ENCODE measurements at regions of chr18 and their contacts with region 1.

Region 1: DNA sequence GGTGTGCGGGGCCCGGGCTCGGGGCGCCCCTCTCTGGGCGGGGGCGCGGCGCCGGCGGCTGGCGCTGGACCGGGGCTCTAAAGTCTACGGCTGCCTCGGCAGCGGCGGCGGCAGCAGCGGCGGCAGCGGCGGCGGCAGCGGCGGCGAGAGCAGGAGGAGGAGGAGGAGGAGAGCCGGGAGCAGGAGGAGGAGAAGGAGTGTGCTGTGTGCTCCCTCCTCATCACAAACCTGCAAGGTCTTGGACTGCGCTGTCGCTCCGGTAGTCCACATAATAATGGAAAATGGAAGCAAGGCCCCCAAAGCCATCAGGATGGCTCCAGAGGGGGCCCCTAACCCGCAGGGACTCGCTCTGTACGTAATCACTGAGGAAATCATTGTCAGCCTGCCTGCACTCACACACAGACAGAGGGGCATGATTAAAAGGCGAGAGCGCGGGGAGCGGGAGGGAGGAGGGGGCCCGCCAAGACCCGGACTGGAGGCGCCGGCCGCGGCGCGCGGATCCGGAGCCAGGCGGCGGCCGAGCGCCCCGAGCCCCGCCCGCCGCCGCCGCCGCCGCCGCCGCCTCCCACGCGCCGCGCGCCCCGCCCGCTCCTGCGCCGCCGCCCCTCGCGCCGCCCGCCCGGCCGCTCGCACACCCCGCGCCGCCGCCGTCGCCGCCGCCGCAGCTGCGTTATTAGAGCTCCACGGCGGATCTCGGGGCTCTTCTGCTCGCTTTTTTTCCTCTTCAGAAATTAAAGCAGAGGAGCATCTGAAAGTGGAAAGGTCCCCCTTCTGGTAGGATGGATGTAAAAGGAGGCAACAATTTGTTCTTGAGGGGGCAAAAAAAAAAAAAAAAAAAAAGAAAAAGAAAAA is at the start of gene ZNF521:
- DNase-seq: peak; percentile 88 to 92
- ATAC-seq: peak; percentile 84 to 91 (median 88)
- H3K4me3 ChIP-seq: peak within 1 kb of the TSS; percentile 88
- H3K27ac ChIP-seq: peak within 1 kb of the TSS; percentile 93
- H3K4me1 ChIP-seq: peaks cover 9% of the 10 kb centered on the region
- H3K27me3 ChIP-seq: no peaks in the 10 kb centered on the region
- CTCF ChIP-seq: peak; percentile 9
- total RNA-seq, gene ZNF521: 4.2 to 13.2 (median 6.1) TPM

Region 2: DNA sequence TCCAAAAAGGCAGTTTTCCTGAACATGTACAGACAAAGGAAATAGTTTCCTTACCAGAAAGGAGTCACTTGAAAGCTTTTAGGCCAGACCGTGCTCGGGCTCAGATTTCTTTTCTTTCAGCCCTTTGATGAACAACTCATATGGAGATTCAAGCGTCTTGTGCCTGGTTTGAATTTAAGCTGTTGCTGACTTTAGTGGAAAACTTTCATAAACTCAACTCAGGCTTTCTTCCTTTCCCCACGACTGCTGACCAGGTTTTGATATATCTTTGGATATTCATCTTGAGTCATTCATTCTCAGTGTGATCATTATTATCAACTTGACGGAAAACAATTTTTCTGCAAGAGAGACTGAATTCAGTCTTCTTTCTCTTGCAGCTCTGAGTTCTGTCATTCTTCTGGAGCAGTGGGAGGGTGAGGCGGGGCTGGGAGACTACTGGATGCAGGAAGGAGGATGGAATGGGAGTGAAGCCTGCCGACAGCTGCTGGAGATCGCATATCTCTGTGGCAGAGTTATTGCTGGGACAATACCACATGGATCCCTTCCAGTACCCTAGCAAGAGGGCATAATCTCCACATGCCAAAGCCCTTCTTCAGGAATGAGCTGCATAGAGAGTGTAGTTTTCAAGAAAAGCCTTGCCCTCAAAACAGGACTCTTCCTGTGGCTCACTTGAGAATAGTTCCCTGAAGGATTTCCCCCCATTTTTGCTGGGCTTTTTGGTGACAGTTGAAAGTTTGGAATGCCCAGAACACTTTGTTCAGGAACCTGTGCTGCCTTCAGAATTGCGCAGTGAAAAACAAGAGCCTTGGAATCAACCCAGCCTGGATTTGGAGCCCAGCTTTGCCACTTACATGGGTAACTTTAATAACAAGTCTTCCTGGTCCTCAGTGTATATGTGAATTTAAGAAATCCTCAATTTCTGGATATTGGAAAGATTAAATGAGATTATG is 364.4 kb before region 1 on chr18:
- intact Hi-C with region 1: loop called (anchors 5 to 10 kb)
- DNase-seq: peak; percentile 64 to 89
- ATAC-seq: peak; percentile 88 to 93 (median 88)
- H3K4me3 ChIP-seq: peak overlapping the region; percentile 54
- H3K27ac ChIP-seq: peak overlapping the region; percentile 86
- H3K4me1 ChIP-seq: peaks cover 73% of the 10 kb centered on the region
- H3K27me3 ChIP-seq: no peaks in the 10 kb centered on the region
- CTCF ChIP-seq: no peak

Region 3: DNA sequence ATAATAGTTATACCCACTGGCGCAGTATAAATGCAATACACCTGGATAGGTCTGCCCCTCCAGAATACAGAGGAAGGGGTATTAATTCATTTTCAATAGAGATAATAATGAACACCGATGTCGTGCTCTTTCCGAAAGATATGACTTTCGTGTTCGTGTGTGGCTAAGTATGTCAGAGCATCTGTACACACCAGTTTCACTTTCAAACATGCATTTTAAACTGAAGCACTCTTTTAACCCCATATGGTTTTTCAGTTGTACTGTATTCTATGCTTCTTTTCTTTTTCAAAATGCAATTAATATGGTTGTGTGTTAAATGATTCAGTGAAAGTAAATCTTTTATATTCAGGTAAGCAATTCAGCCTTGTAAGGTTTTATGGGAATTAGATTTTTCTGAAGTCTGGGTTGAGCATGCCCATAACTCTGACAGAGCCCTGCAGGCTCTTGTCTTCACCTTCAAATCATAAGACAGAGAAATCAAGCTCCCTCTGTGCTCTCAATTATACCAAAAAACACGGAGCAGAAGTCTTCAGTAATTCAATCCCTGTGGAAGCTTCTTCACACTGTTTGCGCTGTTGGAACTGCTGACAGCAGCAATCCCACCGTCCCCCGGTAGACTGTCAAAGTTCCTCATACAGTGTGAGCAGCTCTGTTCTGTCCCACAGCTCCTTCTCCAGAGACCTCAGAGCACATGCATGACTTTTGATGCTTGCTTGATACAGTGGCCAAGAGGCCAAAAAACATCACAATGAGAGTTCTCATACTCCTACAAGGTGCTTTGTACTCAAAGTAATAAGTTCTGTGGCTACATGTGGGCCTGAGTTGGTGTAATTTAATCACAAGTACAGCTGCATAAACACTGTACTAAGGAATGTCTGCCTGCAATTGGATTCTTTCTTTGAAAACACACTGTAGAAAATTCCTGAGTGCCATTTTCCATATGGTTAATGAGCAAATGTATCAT is 186.9 kb before region 1 on chr18:
- intact Hi-C with region 1: loop called in 1 of 2 experiments (anchors 5 kb)
- DNase-seq: no peak
- ATAC-seq: peak; percentile 56 to 76 (median 70)
- H3K4me3 ChIP-seq: peak overlapping the region; percentile 57
- H3K27ac ChIP-seq: peak overlapping the region; percentile 1
- H3K4me1 ChIP-seq: peaks cover 27% of the 10 kb centered on the region
- H3K27me3 ChIP-seq: no peaks in the 10 kb centered on the region
- CTCF ChIP-seq: peak; percentile 10

Region 4: GRCh38 chr18:25298853-25299274 is 53.1 kb before region 1 on chr18:
- intact Hi-C with region 1: loop called in 1 of 2 experiments (anchors 1 kb)
- DNase-seq: peak; percentile 65 to 74
- ATAC-seq: peak; percentile 92 to 95 (median 92)
- H3K4me3 ChIP-seq: no peak overlapping the region
- H3K27ac ChIP-seq: peak overlapping the region; percentile 82
- H3K4me1 ChIP-seq: peaks cover 23% of the 10 kb centered on the region
- H3K27me3 ChIP-seq: no peaks in the 10 kb centered on the region
- CTCF ChIP-seq: no peak

Region 5: GRCh38 chr18:25503567-25504081 is 151.6 kb after region 1 on chr18:
- intact Hi-C with region 1: loop called in 1 of 2 experiments (anchors 10 kb)
- DNase-seq: peak; percentile 41 to 68
- ATAC-seq: peak; percentile 72 to 99 (median 91)
- H3K4me3 ChIP-seq: peak overlapping the region; percentile 52
- H3K27ac ChIP-seq: no peak overlapping the region
- H3K4me1 ChIP-seq: no peaks in the 10 kb centered on the region
- H3K27me3 ChIP-seq: no peaks in the 10 kb centered on the region
- CTCF ChIP-seq: no peak

Region 6: DNA sequence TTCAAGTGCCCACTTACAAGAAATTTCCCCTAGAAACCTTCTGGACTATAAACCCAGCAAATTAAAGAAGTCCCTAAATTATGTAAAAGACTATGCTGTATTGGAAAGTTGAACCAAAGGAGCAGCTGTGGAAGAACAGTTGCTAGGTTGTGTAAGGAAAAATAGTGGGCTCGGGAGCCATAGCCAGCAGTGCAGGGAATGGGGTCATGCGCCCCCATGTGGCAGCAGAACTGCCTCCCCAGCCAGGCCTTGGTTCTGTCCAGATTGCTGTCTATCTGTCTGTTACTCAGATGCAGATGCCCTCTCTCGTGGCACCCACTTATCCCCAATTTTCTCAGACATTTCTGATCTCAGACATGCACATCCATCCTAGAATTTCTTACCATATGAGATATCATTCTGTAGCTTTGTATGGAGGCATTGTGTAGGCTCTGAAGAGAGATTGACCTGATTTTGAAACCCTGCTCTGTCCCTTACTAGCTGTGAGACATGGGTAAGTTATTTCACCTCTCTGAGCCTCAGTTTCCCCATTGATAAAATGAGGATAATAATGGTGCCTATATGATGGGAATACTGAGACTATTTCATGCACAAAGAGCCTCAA is 480.1 kb after region 1 on chr18:
- intact Hi-C with region 1: loop called in 1 of 2 experiments (anchors 10 kb)
- DNase-seq: peak; percentile 61 to 71
- ATAC-seq: peak; percentile 86 to 93 (median 87)
- H3K4me3 ChIP-seq: no peak overlapping the region
- H3K27ac ChIP-seq: no peak overlapping the region
- H3K4me1 ChIP-seq: no peaks in the 10 kb centered on the region
- H3K27me3 ChIP-seq: no peaks in the 10 kb centered on the region
- CTCF ChIP-seq: peak; percentile 75